Heart left ventricle (tissue), 16 donors: ENCODE measurements at regions of chr2 and their contacts with region 1.

Region 1: GRCh38 chr2:236498369-236498768 is 71.3 kb upstream of the ACKR3 start:
- DNase-seq: peak in 2 of 5 donors; percentile 31 to 51
- ATAC-seq: peak; percentile 67 to 93 (median 76)
- H3K4me3 ChIP-seq: no peak overlapping the region
- H3K27ac ChIP-seq: no peak overlapping the region
- H3K4me1 ChIP-seq: peaks cover 0 to 8% (median 0%) of the 10 kb centered on the region in 12 donors
- H3K27me3 ChIP-seq: no peaks in the 10 kb centered on the region
- CTCF ChIP-seq: no peak
- POLR2A ChIP-seq: no peak

Region 2: GRCh38 chr2:236363711-236364277 is 134.6 kb before region 1 on chr2:
- intact Hi-C with region 1: loop called in 3 of 10 experiments (anchors 2 to 10 kb)
- DNase-seq: no peak
- ATAC-seq: no peak
- H3K4me3 ChIP-seq: no peak overlapping the region
- H3K27ac ChIP-seq: no peak overlapping the region
- H3K4me1 ChIP-seq: peaks cover 0 to 4% (median 0%) of the 10 kb centered on the region in 12 donors
- H3K27me3 ChIP-seq: peaks cover 0 to 6% (median 0%) of the 10 kb centered on the region in 9 donors
- CTCF ChIP-seq: no peak
- POLR2A ChIP-seq: no peak

Region 3: GRCh38 chr2:236369661-236370062 is 128.7 kb before region 1 on chr2:
- intact Hi-C with region 1: loop called in 1 of 10 experiments (anchors 10 kb)
- DNase-seq: peak in 1 of 5 donors; percentile 68
- ATAC-seq: no peak
- H3K4me3 ChIP-seq: no peak overlapping the region
- H3K27ac ChIP-seq: no peak overlapping the region
- H3K4me1 ChIP-seq: peaks cover 0 to 8% (median 0%) of the 10 kb centered on the region in 12 donors
- H3K27me3 ChIP-seq: peaks cover 0 to 18% (median 5%) of the 10 kb centered on the region in 9 donors
- CTCF ChIP-seq: no peak
- POLR2A ChIP-seq: no peak

Region 4: GRCh38 chr2:236473691-236474090 is 24.7 kb before region 1 on chr2:
- intact Hi-C with region 1: loop called in 1 of 10 experiments (anchors 2 kb)
- DNase-seq: no peak
- ATAC-seq: no peak
- H3K4me3 ChIP-seq: no peak overlapping the region
- H3K27ac ChIP-seq: no peak overlapping the region
- H3K4me1 ChIP-seq: no peaks in the 10 kb centered on the region
- H3K27me3 ChIP-seq: peaks cover 0 to 4% (median 0%) of the 10 kb centered on the region in 9 donors
- CTCF ChIP-seq: no peak
- POLR2A ChIP-seq: no peak

Region 5: GRCh38 chr2:237354892-237355291 is 856.5 kb after region 1 on chr2:
- intact Hi-C with region 1: no loop called
- DNase-seq: no peak
- ATAC-seq: peak in 3 of 4 donors; percentile 47 to 65 (median 53)
- H3K4me3 ChIP-seq: no peak overlapping the region
- H3K27ac ChIP-seq: peak overlapping the region in 5 of 12 donors; percentile 14 to 71 (median 52)
- H3K4me1 ChIP-seq: peaks cover 0 to 8% (median 0%) of the 10 kb centered on the region in 12 donors
- H3K27me3 ChIP-seq: peaks cover 0 to 5% (median 0%) of the 10 kb centered on the region in 9 donors
- CTCF ChIP-seq: no peak
- POLR2A ChIP-seq: no peak